Naive thymus-derived CD4-positive, alpha-beta T cell (primary cell): ENCODE measurements at regions of chr14 and their contacts with region 1.

Region 1: GRCh38 chr14:34982417-34983147 is at the start of gene SRP54:
- DNase-seq: peak; percentile 97 to 100 (median 100)
- ATAC-seq: peak; percentile 96
- H3K4me3 ChIP-seq: peak within 1 kb of the TSS; percentile 82
- H3K4me3 Mint-ChIP-seq: no peak within 1 kb of the TSS
- H3K27ac ChIP-seq: peak within 1 kb of the TSS; percentile 98
- H3K27ac Mint-ChIP-seq: no peak within 1 kb of the TSS
- H3K4me1 ChIP-seq: peaks cover 22% of the 10 kb centered on the region in 2 donors
- H3K4me1 Mint-ChIP-seq: peaks cover 0 to 30% (median 9%) of the 10 kb centered on the region in 7 donors
- H3K27me3 ChIP-seq: no peaks in the 10 kb centered on the region
- H3K27me3 Mint-ChIP-seq: no peaks in the 10 kb centered on the region
- total RNA-seq, gene SRP54: 35.8 to 61.4 (median 52.0) TPM

Region 2: DNA sequence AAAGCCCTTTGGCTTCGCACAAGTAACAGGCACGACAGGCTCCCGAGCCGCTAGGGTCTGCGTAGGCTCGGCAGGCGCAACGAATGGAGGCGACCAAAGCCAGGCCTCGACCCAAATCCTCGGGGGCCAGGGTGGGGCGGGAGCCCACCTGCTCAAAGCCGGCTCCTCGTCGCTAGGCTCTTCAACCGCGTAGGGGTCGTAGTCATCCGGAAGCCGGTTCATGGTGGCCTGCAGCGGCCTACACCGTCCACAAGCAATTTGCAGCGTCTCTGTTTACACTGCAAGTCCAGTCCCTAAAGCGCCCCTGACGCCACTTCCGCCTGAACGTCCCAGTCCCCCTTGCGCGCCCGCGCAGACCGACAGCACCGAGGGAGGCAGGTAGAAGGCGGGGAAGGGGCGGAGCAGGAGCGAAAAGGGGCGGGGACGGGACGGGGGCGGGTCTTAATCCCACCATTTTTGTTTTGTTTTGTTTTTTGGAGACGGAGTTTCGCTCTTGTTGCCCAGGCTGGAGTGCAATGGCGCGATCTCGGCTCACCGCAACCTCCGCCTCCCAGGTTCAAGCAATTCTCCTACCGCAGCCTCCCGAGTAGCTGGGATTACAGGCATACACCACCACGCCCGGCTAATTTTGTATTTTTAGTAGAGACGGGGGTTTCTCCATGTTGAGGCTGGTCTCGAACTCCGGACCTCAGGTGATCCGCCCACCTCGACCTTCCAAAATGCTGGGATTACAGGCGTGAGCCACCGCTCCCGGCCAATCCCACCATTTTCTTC is 443.0 kb before region 1 on chr14 and contains the start of gene EAPP:
- CTCF ChIA-PET with region 1: no interaction called
- POLR2A ChIA-PET with region 1: interaction called, 5 read pairs
- intact Hi-C with region 1: loop called (anchors 5 kb)
- DNase-seq: peak; percentile 84 to 95 (median 91)
- ATAC-seq: peak; percentile 100
- H3K4me3 ChIP-seq: peak within 1 kb of the TSS; percentile 100
- H3K4me3 Mint-ChIP-seq: peak within 1 kb of the TSS; percentile 95 to 99 (median 99)
- H3K27ac ChIP-seq: peak within 1 kb of the TSS; percentile 97
- H3K27ac Mint-ChIP-seq: peak within 1 kb of the TSS; percentile 95 to 100 (median 99)
- H3K4me1 ChIP-seq: peaks cover 18 to 24% of the 10 kb centered on the region in 2 donors
- H3K4me1 Mint-ChIP-seq: peaks cover 5 to 45% (median 31%) of the 10 kb centered on the region in 7 donors
- H3K27me3 ChIP-seq: no peaks in the 10 kb centered on the region
- H3K27me3 Mint-ChIP-seq: no peaks in the 10 kb centered on the region
- total RNA-seq, gene EAPP: 34.8 to 84.3 (median 60.9) TPM

Region 3: GRCh38 chr14:34714320-34715126 is 268.1 kb before region 1 on chr14 and contains the start of gene CFL2:
- CTCF ChIA-PET with region 1: no interaction called
- POLR2A ChIA-PET with region 1: interaction called, 3 read pairs
- intact Hi-C with region 1: loop called (anchors 1 kb)
- DNase-seq: peak; percentile 41 to 85 (median 54)
- ATAC-seq: peak; percentile 86
- H3K4me3 ChIP-seq: peak within 1 kb of the TSS; percentile 62
- H3K4me3 Mint-ChIP-seq: peak within 1 kb of the TSS; percentile 89 to 97 (median 92)
- H3K27ac ChIP-seq: peak within 1 kb of the TSS; percentile 93
- H3K27ac Mint-ChIP-seq: peak within 1 kb of the TSS; percentile 85 to 95 (median 92)
- H3K4me1 ChIP-seq: peaks cover 4 to 6% of the 10 kb centered on the region in 2 donors
- H3K4me1 Mint-ChIP-seq: peaks cover 8 to 39% (median 27%) of the 10 kb centered on the region in 7 donors
- H3K27me3 ChIP-seq: no peaks in the 10 kb centered on the region
- H3K27me3 Mint-ChIP-seq: peaks cover 0 to 20% (median 0%) of the 10 kb centered on the region in 5 donors
- total RNA-seq, gene CFL2: 5.2 to 34.2 (median 11.7) TPM

Region 4: DNA sequence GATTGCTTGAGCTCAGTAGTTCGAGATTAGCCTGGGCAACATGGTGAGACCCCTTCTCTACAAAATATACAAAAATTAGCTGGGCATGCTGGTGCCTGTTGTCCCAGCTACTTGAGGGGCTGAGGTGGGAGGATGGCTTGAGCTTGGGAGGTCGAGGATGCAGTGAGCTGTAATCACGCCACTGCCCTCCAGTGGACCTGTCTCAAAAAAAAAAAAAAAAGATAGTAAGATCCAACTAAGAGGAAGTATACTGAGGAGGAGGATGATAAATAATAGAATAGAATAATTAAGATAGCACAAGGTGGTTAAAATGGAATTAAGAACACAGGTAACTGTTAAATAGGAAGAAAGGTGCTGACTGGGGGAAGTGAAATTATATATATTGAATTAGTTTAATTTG is 70.4 kb before region 1 on chr14:
- CTCF ChIA-PET with region 1: no interaction called
- POLR2A ChIA-PET with region 1: interaction called, 4 read pairs
- intact Hi-C with region 1: loop called in 1 of 2 experiments (anchors 5 kb)
- DNase-seq: no peak
- ATAC-seq: no peak
- H3K4me3 ChIP-seq: no peak overlapping the region
- H3K4me3 Mint-ChIP-seq: no peak overlapping the region
- H3K27ac ChIP-seq: no peak overlapping the region
- H3K27ac Mint-ChIP-seq: peak overlapping the region in 5 of 9 donors; percentile 2 to 71 (median 16)
- H3K4me1 ChIP-seq: no peaks in the 10 kb centered on the region
- H3K4me1 Mint-ChIP-seq: peaks cover 0 to 10% (median 0%) of the 10 kb centered on the region in 7 donors
- H3K27me3 ChIP-seq: no peaks in the 10 kb centered on the region
- H3K27me3 Mint-ChIP-seq: no peaks in the 10 kb centered on the region

Region 5: DNA sequence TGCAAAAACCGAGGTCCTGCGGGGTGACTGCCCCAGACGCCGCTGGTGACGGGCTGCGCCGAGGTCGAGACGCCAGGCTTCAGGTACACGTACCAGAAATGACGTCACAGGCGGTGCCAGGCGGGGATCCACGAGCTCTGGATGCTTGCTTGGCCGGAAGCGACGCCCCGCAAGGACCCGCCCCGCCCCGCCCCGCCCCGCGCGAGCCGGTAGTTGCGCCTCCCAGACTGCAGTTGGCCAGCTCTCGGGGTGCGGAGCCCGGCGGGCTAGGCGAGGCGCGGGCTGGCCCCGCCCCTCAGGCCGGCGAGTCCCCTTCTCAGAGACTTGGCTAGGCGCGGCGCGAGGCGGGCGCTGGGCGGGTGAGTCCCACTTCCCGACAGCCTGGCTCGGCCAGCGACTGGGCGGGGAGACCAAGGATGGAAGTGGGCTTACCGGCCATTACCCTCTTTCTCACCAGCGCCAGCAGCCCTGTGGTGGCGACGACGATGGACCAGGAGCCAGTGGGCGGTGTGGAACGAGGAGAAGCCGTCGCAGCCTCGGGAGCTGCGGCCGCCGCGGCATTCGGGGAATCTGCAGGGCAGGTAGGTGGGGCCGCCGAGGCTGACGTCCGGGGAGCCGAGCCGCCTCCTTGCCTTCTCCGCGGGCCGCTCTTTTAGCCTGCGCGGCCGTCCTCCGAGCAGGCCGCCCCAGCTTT is 63.6 kb after region 1 on chr14 and contains the start of gene FAM177A1:
- CTCF ChIA-PET with region 1: interaction called, 3 read pairs
- POLR2A ChIA-PET with region 1: interaction called, 44 read pairs
- intact Hi-C with region 1: loop called (anchors 1 kb)
- DNase-seq: peak; percentile 89 to 100 (median 98)
- ATAC-seq: peak; percentile 94
- H3K4me3 ChIP-seq: peak within 1 kb of the TSS; percentile 80
- H3K4me3 Mint-ChIP-seq: peak within 1 kb of the TSS; percentile 88 to 99 (median 93)
- H3K27ac ChIP-seq: peak within 1 kb of the TSS; percentile 99
- H3K27ac Mint-ChIP-seq: peak within 1 kb of the TSS; percentile 96 to 100 (median 99)
- H3K4me1 ChIP-seq: peaks cover 11 to 19% of the 10 kb centered on the region in 2 donors
- H3K4me1 Mint-ChIP-seq: peaks cover 13 to 39% (median 34%) of the 10 kb centered on the region in 7 donors
- H3K27me3 ChIP-seq: no peaks in the 10 kb centered on the region
- H3K27me3 Mint-ChIP-seq: no peaks in the 10 kb centered on the region
- total RNA-seq, gene FAM177A1: 34.3 to 135 (median 41.7) TPM

Region 6: DNA sequence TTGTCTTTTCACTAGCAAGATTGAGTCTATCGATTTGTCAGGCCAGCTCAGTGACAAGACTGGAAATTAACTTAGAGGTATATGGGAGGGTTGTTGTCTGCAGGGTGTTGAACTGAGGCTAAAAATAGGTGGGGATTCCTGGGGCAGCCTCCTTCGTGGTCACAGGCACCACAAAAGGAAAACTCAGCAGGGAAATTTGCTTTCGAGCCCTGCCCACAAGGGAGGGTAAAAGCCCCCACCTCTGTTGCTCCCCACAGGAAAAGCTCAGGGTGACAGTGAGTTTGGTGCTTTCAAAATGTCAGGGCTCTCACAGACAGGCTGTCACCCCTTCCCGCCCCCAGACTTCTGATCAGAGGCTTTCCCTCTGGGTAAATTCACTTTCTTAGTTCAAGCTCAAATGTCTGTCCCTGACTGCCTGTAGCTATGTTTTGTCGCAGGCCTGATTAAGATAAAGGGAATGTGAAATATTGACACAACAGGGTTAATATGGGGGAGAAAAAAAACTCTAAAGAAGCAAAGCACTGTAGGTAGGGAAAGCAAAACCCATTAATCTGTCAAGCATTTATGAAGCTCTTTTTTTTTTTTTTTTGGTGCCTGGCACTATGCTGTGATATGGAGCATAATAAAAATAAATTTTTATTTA is 433.6 kb after region 1 on chr14:
- CTCF ChIA-PET with region 1: no interaction called
- POLR2A ChIA-PET with region 1: interaction called, 5 read pairs
- intact Hi-C with region 1: loop called (anchors 1 kb)
- DNase-seq: peak in 6 of 9 donors; percentile 18 to 80 (median 30)
- ATAC-seq: peak; percentile 67
- H3K4me3 ChIP-seq: no peak overlapping the region
- H3K4me3 Mint-ChIP-seq: peak overlapping the region; percentile 46 to 81 (median 72)
- H3K27ac ChIP-seq: peak overlapping the region; percentile 73
- H3K27ac Mint-ChIP-seq: peak overlapping the region; percentile 76 to 95 (median 92)
- H3K4me1 ChIP-seq: peaks cover 31 to 32% of the 10 kb centered on the region in 2 donors
- H3K4me1 Mint-ChIP-seq: peaks cover 29 to 48% (median 45%) of the 10 kb centered on the region in 7 donors
- H3K27me3 ChIP-seq: no peaks in the 10 kb centered on the region
- H3K27me3 Mint-ChIP-seq: peaks cover 0 to 7% (median 0%) of the 10 kb centered on the region in 5 donors

Region 7: DNA sequence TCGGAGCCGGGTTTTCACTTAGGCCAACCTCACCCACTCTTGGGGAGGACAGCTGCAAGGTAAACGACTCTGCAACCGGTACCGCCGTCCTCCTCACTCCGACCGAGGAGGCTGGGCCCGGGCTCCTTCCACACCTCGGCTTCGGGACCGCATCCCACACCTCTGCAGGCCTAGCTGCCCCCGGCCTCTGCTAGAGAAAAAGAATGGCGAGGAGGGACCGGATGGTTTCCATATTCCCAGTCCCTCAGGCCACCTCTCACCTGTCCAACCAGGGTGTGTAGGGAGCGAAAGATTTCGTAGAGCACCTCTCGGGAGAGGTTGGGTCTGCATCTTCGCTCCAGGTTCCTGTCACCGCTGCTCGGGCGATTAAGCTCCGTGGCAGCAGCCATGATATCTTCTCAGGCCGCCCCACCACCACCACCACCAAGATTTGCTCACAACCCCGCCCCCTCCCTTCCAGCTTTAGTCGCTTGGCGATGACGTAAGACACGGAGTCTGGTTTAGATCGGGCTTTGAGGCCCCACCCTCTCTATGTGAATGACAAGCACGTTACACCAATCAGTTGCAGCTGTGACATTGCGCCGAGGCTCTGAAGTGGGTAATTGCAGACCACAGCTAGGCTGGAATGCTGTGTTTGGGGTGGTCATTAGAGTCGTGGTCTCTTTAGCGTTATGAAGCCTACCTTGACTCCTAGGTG is 1337.8 kb after region 1 on chr14 and contains the start of gene MBIP:
- CTCF ChIA-PET with region 1: no interaction called
- POLR2A ChIA-PET with region 1: no interaction called
- intact Hi-C with region 1: loop called in 1 of 2 experiments (anchors 2 kb)
- DNase-seq: peak; percentile 65 to 96 (median 85)
- ATAC-seq: peak; percentile 99
- H3K4me3 ChIP-seq: peak within 1 kb of the TSS; percentile 97
- H3K4me3 Mint-ChIP-seq: peak within 1 kb of the TSS; percentile 88 to 99 (median 98)
- H3K27ac ChIP-seq: peak within 1 kb of the TSS; percentile 81
- H3K27ac Mint-ChIP-seq: peak within 1 kb of the TSS; percentile 90 to 97 (median 95)
- H3K4me1 ChIP-seq: peaks cover 4 to 12% of the 10 kb centered on the region in 2 donors
- H3K4me1 Mint-ChIP-seq: peaks cover 16 to 52% (median 46%) of the 10 kb centered on the region in 7 donors
- H3K27me3 ChIP-seq: no peaks in the 10 kb centered on the region
- H3K27me3 Mint-ChIP-seq: peaks cover 6 to 25% (median 10%) of the 10 kb centered on the region in 5 donors
- total RNA-seq, gene MBIP: 22.5 to 42.7 (median 24.6) TPM